Activated CD4-positive, alpha-beta T cell treated with anti-CD3 and anti-CD28 coated beads for 36 hours (primary cell): ENCODE measurements at regions of chr6 and their contacts with region 1.

Region 1: DNA sequence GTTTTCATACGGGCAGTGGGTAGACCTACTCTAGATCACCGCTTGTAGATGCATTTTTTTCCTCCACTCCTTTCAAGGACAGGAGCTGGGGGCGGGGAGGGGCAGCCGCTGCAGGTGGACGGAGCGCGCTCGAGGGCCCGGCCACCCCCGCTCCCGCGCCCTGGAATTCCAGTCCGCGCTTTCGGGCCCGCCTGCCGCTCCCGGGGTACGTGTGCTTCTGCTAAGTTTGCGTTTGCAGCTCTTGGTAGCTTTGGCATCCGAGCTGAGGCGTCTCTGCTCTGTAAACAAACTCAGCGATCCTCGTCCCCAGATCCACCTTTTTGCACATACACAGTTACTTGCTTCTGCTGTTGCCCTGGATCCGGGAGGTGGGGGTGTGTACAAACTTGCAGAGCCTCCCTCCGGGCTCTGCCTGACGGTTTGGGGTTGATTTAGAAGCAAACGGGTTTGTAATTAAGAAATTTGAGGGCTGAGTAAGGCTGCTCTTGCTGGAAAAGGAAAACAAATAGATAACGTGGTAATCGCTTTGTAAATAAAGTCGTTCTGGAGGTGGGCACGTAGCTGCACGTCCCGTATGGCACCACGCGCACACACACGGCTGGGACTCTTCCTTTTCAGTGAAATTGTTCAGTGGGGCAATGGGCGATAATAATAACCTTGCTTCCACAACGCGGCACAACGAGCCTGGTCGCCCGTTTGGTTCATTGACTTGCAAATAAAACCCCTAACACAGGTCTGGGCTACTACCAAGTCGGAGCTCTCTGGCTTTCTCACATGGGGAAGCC is 976 bp upstream of the CITED2 start:
- DNase-seq: peak; percentile 90
- ATAC-seq: peak; percentile 57
- H3K4me3 Mint-ChIP-seq: peak overlapping the region; percentile 99
- H3K27ac Mint-ChIP-seq: peak overlapping the region; percentile 97
- H3K4me1 Mint-ChIP-seq: peaks cover 33% of the 10 kb centered on the region
- H3K27me3 Mint-ChIP-seq: no peaks in the 10 kb centered on the region

Region 2: GRCh38 chr6:138728662-138729061 is 646.8 kb before region 1 on chr6:
- CTCF ChIA-PET with region 1: no interaction called
- POLR2A ChIA-PET with region 1: no interaction called
- intact Hi-C with region 1: no loop called
- DNase-seq: no peak
- ATAC-seq: no peak
- H3K4me3 Mint-ChIP-seq: no peak overlapping the region
- H3K27ac Mint-ChIP-seq: no peak overlapping the region
- H3K4me1 Mint-ChIP-seq: no peaks in the 10 kb centered on the region
- H3K27me3 Mint-ChIP-seq: no peaks in the 10 kb centered on the region

Region 3: GRCh38 chr6:138987640-138988468 is 387.6 kb before region 1 on chr6 and contains the start of gene REPS1:
- CTCF ChIA-PET with region 1: no interaction called
- POLR2A ChIA-PET with region 1: interaction called, 6 read pairs
- intact Hi-C with region 1: loop called (anchors 1 to 5 kb)
- DNase-seq: peak; percentile 95
- ATAC-seq: peak; percentile 96
- H3K4me3 Mint-ChIP-seq: peak within 1 kb of the TSS; percentile 87
- H3K27ac Mint-ChIP-seq: peak within 1 kb of the TSS; percentile 91
- H3K4me1 Mint-ChIP-seq: peaks cover 6% of the 10 kb centered on the region
- H3K27me3 Mint-ChIP-seq: no peaks in the 10 kb centered on the region
- total RNA-seq, gene REPS1: 60.3 to 90.9 TPM

Region 4: DNA sequence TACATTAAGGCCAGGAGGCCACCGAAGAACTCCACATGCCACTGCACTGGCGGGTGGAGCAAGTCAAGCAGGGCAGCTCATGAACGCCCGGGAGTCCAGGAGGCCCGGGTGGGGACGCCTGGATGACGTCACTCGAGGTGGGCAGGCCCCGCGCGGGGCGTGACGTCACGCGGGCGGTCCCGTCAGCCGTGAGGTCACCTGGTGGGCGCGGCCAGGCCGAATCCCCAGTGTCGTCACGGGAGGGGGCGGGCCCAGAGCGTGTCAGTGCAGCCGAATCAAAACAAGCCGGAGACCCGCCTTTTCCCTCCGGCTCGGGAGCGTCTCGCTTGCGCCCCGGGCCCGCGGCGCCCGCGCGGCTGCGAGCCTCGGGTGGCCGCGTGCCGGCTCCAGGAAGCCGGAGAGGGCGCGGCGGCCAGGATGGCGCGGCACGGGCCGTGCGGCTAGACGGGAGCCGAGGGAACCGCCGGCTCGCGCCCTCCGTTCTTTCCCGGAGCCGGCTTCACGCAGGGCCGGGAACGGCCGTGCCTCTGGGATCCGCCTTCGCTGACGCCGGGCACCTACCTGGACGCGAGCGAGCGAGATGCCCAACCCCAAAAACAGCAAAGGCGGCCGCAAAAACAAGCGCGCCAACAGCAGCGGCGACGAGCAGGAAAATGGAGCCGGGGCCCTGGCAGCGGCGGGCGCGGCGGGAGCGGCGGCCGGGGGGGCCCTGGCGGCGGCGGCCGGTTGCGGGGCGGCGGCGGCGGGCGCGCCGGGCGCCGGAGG is 240.4 kb before region 1 on chr6 and contains the start of gene HECA:
- CTCF ChIA-PET with region 1: interaction called, 6 read pairs
- POLR2A ChIA-PET with region 1: interaction called, 6 read pairs
- intact Hi-C with region 1: loop called in 1 of 2 experiments (anchors 2 kb)
- DNase-seq: peak; percentile 100
- ATAC-seq: peak; percentile 70
- H3K4me3 Mint-ChIP-seq: peak within 1 kb of the TSS; percentile 93
- H3K27ac Mint-ChIP-seq: peak within 1 kb of the TSS; percentile 98
- H3K4me1 Mint-ChIP-seq: peaks cover 49% of the 10 kb centered on the region
- H3K27me3 Mint-ChIP-seq: no peaks in the 10 kb centered on the region
- total RNA-seq, gene HECA: 51.6 to 63.4 TPM

Region 5: GRCh38 chr6:139291813-139292619 is 83.4 kb before region 1 on chr6 and contains the start of gene TXLNB:
- CTCF ChIA-PET with region 1: interaction called, 6 read pairs
- POLR2A ChIA-PET with region 1: interaction called, 4 read pairs
- intact Hi-C with region 1: loop called in 1 of 2 experiments (anchors 1 kb)
- DNase-seq: peak; percentile 92
- ATAC-seq: peak; percentile 94
- H3K4me3 Mint-ChIP-seq: peak within 1 kb of the TSS; percentile 64
- H3K27ac Mint-ChIP-seq: peak within 1 kb of the TSS; percentile 96
- H3K4me1 Mint-ChIP-seq: peaks cover 66% of the 10 kb centered on the region
- H3K27me3 Mint-ChIP-seq: no peaks in the 10 kb centered on the region
- total RNA-seq, gene TXLNB: 0.26 to 0.27 TPM

Region 6: DNA sequence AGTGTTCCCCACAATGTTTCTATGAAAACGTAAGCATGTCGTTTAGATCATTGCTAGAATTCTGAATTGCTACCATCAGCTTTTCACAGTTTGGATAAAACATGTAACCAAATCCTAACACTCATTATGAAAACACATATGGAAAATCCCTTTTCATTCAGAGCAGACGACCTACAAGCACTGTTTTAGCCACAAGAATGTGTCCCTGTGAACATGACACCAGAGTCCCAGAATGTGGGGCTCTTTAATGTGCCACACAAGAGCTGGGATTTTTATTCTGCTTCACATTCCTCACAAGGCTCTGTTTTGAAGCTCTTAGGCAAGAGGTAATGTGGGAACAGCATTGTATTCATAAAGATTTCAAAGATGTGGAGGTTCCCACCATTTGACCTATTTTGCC is 140.1 kb after region 1 on chr6:
- CTCF ChIA-PET with region 1: no interaction called
- POLR2A ChIA-PET with region 1: interaction called, 3 read pairs
- intact Hi-C with region 1: loop called (anchors 2 kb)
- DNase-seq: no peak
- ATAC-seq: peak; percentile 79
- H3K4me3 Mint-ChIP-seq: no peak overlapping the region
- H3K27ac Mint-ChIP-seq: peak overlapping the region; percentile 76
- H3K4me1 Mint-ChIP-seq: peaks cover 21% of the 10 kb centered on the region
- H3K27me3 Mint-ChIP-seq: no peaks in the 10 kb centered on the region

Region 7: GRCh38 chr6:139996253-139996834 is 620.9 kb after region 1 on chr6:
- CTCF ChIA-PET with region 1: no interaction called
- POLR2A ChIA-PET with region 1: no interaction called
- intact Hi-C with region 1: loop called in 1 of 2 experiments (anchors 10 kb)
- DNase-seq: no peak
- ATAC-seq: no peak
- H3K4me3 Mint-ChIP-seq: no peak overlapping the region
- H3K27ac Mint-ChIP-seq: no peak overlapping the region
- H3K4me1 Mint-ChIP-seq: no peaks in the 10 kb centered on the region
- H3K27me3 Mint-ChIP-seq: no peaks in the 10 kb centered on the region

Region 8: DNA sequence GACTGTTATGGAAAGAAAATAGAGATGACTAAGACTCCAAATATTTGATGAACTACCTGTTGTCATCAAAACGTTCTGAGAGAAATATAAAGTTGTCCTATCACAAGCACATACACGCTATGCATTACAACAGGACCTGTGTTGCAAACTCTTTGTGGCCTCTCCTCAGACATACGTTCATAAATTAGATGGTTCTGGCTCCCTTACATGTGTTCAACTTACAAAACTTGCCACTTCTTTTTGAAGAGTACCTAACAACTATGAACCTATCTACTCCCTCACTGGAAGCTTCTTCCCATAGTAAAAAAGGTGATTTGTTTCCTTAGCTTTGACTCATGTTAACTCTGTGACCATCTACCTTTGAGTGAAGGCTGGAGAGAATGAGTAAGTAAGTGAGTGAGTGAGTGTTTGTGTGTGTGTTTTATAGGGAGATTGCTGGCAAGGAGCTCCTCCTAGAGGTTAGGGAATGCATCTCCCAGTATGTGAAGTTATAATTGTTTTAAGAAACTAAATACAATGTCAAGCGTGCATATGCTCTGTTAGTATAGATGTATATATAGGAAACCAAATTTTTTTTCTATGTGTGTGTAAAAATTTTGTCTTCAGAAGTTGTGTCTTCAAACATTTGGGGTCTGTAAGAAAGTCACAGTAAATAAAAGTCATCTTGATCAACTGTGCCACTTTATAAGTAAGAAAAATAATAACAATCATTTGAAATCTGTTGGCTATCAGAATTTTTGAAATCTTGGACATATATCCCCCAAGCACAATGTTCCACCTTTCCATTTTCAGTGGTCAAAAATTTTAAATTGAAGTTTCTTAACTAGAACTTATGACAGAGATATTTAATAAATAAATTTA is 1546.2 kb after region 1 on chr6:
- CTCF ChIA-PET with region 1: no interaction called
- POLR2A ChIA-PET with region 1: no interaction called
- intact Hi-C with region 1: loop called in 1 of 2 experiments (anchors 10 kb)
- DNase-seq: peak; percentile 10
- ATAC-seq: peak; percentile 93
- H3K4me3 Mint-ChIP-seq: no peak overlapping the region
- H3K27ac Mint-ChIP-seq: no peak overlapping the region
- H3K4me1 Mint-ChIP-seq: no peaks in the 10 kb centered on the region
- H3K27me3 Mint-ChIP-seq: no peaks in the 10 kb centered on the region